H1 (cell line): ENCODE measurements at regions of chr1 and their contacts with region 1.

Region 1: DNA sequence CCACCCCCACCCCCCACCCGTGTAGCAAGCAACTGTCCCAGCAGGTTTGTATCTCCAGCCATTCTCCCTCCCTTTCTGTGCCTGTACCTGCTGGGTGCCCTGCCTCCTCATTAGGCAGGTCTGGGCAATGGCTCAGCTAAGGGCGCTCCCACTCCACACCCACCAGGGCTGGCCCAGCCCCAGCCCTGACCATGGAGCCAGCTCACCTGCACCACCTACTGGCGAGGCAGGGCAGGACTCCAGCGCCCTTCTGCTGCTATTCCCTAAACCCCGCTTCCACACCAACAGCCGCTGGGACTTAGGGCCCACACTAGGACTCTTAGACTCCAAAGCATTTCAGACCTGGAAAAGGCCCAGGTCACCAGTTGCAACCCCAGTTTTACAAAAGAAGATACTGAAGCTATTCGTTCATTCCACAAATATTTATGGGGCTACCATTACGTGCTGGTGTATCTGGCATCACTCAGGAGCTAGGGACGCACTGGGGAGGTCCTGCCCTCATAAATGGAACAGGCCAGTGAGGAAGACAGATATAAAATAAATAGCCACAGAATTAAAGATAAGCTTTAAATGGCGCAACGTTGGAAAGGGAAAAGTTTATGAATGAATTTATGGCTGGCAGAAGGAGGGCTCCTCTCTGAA is 24.0 kb downstream of the PGLYRP3 start:
- DNase-seq: peak; percentile 17 to 92
- H3K4me3 ChIP-seq: no peak overlapping the region
- H3K27ac ChIP-seq: no peak overlapping the region
- H3K4me1 ChIP-seq: peaks cover 0 to 5% (median 2%) of the 10 kb centered on the region in 4 experiments; a peak in 3 of 7 replicates
- H3K27me3 ChIP-seq: no peaks in the 10 kb centered on the region; a peak in 1 of 7 replicates
- CTCF ChIP-seq: peak; percentile 87 to 94 (median 92)
- EP300 ChIP-seq: no peak
- POLR2A ChIP-seq: no peak
- RAD21 ChIP-seq: peak; percentile 58 to 70

Region 2: DNA sequence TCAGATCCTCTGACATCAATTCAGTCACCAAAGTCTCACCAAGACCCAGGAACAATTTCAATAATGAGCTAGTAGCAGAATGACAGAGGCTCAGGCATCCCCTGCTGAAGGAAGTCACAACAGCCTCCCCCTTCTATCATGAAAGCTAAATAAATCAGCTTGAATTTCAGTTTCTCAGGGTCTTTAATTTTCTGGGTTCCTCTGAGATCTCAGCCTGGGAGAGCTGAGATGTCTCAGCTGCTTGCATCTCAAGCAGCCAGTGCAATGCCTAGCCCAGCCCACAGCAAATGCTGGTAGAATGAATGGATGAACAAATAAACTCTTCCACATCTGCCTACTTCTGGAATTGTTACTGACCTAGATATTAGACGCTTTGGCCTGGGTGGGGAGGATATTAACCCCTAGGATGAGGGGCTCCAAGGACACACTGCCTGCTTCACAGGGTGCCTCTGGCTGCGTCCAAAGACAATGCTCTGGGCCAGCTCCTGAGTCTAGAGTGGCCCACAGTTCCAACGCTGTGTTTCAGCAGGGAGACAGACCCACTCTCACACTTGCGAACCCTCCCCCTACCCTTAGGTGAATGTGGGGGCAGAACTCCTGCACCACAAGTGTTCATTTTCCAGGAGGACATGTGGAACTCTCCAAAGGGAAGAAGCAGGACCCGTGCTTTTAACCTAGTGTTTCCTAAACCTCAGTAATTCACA is 40.4 kb before region 1 on chr1:
- CTCF ChIA-PET with region 1: interaction called, 10 read pairs
- POLR2A ChIA-PET with region 1: no interaction called
- DNase-seq: no peak
- H3K4me3 ChIP-seq: no peak overlapping the region
- H3K27ac ChIP-seq: no peak overlapping the region
- H3K4me1 ChIP-seq: no peaks in the 10 kb centered on the region
- H3K27me3 ChIP-seq: no peaks in the 10 kb centered on the region
- CTCF ChIP-seq: no peak
- EP300 ChIP-seq: no peak
- POLR2A ChIP-seq: no peak
- RAD21 ChIP-seq: no peak

Region 3: GRCh38 chr1:153277817-153278216 is 10.9 kb before region 1 on chr1:
- CTCF ChIA-PET with region 1: interaction called, 10 read pairs
- POLR2A ChIA-PET with region 1: no interaction called
- DNase-seq: peak in 1 of 2 experiments; percentile 83
- H3K4me3 ChIP-seq: no peak overlapping the region
- H3K27ac ChIP-seq: no peak overlapping the region
- H3K4me1 ChIP-seq: no peaks in the 10 kb centered on the region
- H3K27me3 ChIP-seq: no peaks in the 10 kb centered on the region; a peak in 1 of 7 replicates
- CTCF ChIP-seq: peak; percentile 87 to 99 (median 96)
- EP300 ChIP-seq: no peak
- POLR2A ChIP-seq: no peak
- RAD21 ChIP-seq: peak; percentile 82 to 84

Region 4: GRCh38 chr1:153306303-153307220 is 17.8 kb after region 1 on chr1:
- CTCF ChIA-PET with region 1: interaction called, 14 read pairs
- POLR2A ChIA-PET with region 1: no interaction called
- DNase-seq: no peak
- H3K4me3 ChIP-seq: no peak overlapping the region
- H3K27ac ChIP-seq: no peak overlapping the region
- H3K4me1 ChIP-seq: peaks cover 0 to 5% (median 0%) of the 10 kb centered on the region in 4 experiments; a peak in 3 of 7 replicates
- H3K27me3 ChIP-seq: no peaks in the 10 kb centered on the region; a peak in 1 of 7 replicates
- CTCF ChIP-seq: no peak
- EP300 ChIP-seq: no peak
- POLR2A ChIP-seq: no peak
- RAD21 ChIP-seq: no peak

Region 5: GRCh38 chr1:153386500-153386901 is 97.7 kb after region 1 on chr1:
- CTCF ChIA-PET with region 1: no interaction called
- POLR2A ChIA-PET with region 1: no interaction called
- DNase-seq: no peak
- H3K4me3 ChIP-seq: no peak overlapping the region
- H3K27ac ChIP-seq: no peak overlapping the region
- H3K4me1 ChIP-seq: no peaks in the 10 kb centered on the region
- H3K27me3 ChIP-seq: peaks cover 0 to 2% (median 0%) of the 10 kb centered on the region in 4 experiments; a peak in 1 of 7 replicates
- CTCF ChIP-seq: no peak
- EP300 ChIP-seq: no peak
- POLR2A ChIP-seq: no peak
- RAD21 ChIP-seq: no peak

Region 6: GRCh38 chr1:153441238-153441933 is 152.6 kb after region 1 on chr1:
- CTCF ChIA-PET with region 1: no interaction called
- POLR2A ChIA-PET with region 1: no interaction called
- DNase-seq: no peak
- H3K4me3 ChIP-seq: no peak overlapping the region
- H3K27ac ChIP-seq: no peak overlapping the region
- H3K4me1 ChIP-seq: no peaks in the 10 kb centered on the region
- H3K27me3 ChIP-seq: no peaks in the 10 kb centered on the region; a peak in 1 of 7 replicates
- CTCF ChIP-seq: no peak
- EP300 ChIP-seq: no peak
- POLR2A ChIP-seq: no peak
- RAD21 ChIP-seq: no peak